Psoas muscle (tissue), 8 donors: ENCODE measurements at regions of chr6 and their contacts with region 1.

Region 1: GRCh38 chr6:165231581-165232561 is 77.5 kb downstream of the C6orf118 start:
- DNase-seq: no peak
- ATAC-seq: peak; percentile 92 to 96 (median 94)
- H3K4me3 ChIP-seq: peak overlapping the region; percentile 52
- H3K27ac ChIP-seq: peak overlapping the region; percentile 91
- H3K4me1 ChIP-seq: peaks cover 19% of the 10 kb centered on the region
- H3K27me3 ChIP-seq: no peaks in the 10 kb centered on the region
- CTCF ChIP-seq: peak; percentile 70

Region 2: GRCh38 chr6:164927288-164928056 is 304.4 kb before region 1 on chr6:
- intact Hi-C with region 1: loop called (anchors 10 kb)
- DNase-seq: peak; percentile 57 to 84
- ATAC-seq: peak; percentile 90 to 99 (median 96)
- H3K4me3 ChIP-seq: peak overlapping the region; percentile 52
- H3K27ac ChIP-seq: no peak overlapping the region
- H3K4me1 ChIP-seq: peaks cover 6% of the 10 kb centered on the region
- H3K27me3 ChIP-seq: no peaks in the 10 kb centered on the region
- CTCF ChIP-seq: peak; percentile 99